PC-9 (cell line): ENCODE measurements at regions of chr2 and their contacts with region 1.

Region 1: DNA sequence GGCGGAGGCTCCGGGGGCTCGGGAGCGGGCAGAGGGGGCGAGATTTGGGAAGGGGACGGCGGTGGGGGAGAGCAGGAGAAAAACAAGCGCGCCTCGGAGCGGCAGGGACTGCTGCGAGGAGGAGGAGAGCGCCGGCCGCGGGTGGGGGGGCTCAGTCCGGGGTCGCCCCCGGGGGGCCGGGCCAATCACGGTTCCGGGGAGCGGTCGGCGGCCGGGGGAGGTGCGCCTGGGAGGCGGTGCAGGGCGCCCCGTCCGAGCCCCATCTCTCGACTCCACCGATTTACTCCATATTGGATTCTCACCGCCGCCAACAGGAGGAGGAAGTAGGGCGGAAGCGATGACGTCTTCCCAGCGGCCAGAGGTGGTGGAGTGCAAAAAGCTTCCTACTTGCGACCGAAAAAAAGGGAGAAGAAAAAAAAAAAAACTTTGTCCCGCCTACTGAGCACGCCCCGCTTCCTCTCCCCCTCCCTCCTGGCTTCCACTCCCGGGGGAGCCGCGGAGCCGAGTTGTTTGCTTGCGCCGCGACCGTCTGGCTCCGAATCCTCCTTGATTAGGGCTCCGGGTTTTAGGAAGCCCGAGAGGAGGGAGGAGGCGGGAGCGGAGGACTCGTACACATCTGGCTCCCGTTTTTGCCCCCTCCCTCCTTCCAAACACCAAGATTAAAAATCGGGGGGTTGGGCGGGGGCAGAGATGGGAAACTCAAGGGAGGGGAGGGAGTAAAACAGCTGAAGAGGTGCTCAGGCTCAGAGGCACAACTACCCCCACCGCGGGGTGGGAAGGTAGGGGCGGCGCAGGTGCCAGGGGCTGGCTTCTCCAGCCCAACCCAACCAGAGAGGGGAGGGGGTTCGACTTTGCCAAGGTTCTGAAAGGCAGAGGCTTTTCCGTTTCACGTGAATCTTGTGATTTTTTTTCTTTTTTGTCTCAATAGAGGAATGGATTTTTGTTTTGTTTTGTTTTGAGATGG is at the start of gene SPRED2:
- DNase-seq: peak; percentile 92
- H3K4me3 ChIP-seq: peak within 1 kb of the TSS; percentile 91
- H3K27ac ChIP-seq: peak within 1 kb of the TSS; percentile 59
- H3K4me1 ChIP-seq: peaks cover 55% of the 10 kb centered on the region
- H3K27me3 ChIP-seq: no peaks in the 10 kb centered on the region
- CTCF ChIP-seq: no peak
- total RNA-seq, gene SPRED2: 33.5 and 33.6 TPM in 2 replicates

Region 2: DNA sequence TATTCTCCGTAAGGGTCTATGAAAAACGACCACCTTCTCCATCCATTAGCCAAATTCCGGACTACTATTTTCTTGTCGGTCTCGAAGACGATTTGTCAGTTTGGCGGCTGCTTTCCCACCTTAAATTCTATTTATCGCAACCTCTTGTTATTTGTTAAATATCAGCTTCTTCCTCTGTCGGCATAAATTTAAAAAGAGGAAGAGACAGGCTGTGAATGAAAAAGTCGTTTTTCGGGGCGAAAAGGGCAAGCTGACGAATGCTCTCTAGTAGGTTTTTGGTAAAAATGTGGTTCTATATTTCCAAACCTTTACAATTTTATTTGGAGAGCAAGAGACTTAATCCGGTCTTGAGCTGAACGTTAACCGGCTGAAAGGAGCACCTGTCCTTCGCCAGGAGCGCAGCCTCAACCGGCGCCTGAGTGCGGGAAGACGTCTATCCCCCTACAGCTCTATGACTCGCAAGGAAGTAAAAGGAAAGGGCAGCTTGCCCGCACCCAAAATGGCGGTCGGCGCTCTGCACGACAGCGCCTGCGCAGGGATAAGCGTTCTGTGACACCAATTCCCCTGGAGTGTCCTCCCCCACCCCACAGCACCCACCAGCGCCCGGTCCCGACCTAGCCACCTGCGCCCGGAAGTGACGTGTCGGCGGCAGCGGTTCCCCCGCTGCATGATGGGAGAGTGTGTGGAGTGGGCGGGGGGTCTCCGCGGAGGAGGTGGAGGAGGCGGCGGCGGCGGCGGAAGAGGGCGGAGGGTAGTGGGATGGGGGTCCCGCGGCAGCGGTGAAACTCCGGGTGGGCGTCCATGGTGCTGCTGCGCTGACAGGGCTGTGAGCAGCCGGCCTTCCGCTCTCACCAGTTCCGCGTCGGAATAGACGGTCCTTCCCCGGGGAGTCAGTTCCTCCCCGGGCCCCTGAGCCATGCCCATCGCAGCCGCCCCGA is 908.6 kb before region 1 on chr2 and contains the start of gene AFTPH:
- CTCF ChIA-PET with region 1: no interaction called
- POLR2A ChIA-PET with region 1: no interaction called
- intact Hi-C with region 1: loop called (anchors 5 kb)
- DNase-seq: peak; percentile 98 to 99
- H3K4me3 ChIP-seq: peak within 1 kb of the TSS; percentile 67
- H3K27ac ChIP-seq: peak within 1 kb of the TSS; percentile 72
- H3K4me1 ChIP-seq: peaks cover 18% of the 10 kb centered on the region
- H3K27me3 ChIP-seq: no peaks in the 10 kb centered on the region
- CTCF ChIP-seq: no peak
- total RNA-seq, gene AFTPH: 34.4 and 40.5 TPM in 2 replicates

Region 3: GRCh38 chr2:65281627-65282351 is 150.7 kb before region 1 on chr2:
- CTCF ChIA-PET with region 1: interaction called, 4 read pairs
- POLR2A ChIA-PET with region 1: no interaction called
- intact Hi-C with region 1: loop called (anchors 5 kb)
- DNase-seq: no peak
- H3K4me3 ChIP-seq: no peak overlapping the region
- H3K27ac ChIP-seq: no peak overlapping the region
- H3K4me1 ChIP-seq: no peaks in the 10 kb centered on the region
- H3K27me3 ChIP-seq: no peaks in the 10 kb centered on the region
- CTCF ChIP-seq: no peak

Region 4: GRCh38 chr2:65382776-65383357 is 49.6 kb before region 1 on chr2:
- CTCF ChIA-PET with region 1: interaction called, 5 read pairs
- POLR2A ChIA-PET with region 1: no interaction called
- intact Hi-C with region 1: loop called (anchors 1 kb)
- DNase-seq: peak; percentile 97 to 98
- H3K4me3 ChIP-seq: peak overlapping the region; percentile 15; the same call in 1 of the 2 replicates
- H3K27ac ChIP-seq: peak overlapping the region; percentile 82
- H3K4me1 ChIP-seq: peaks cover 78% of the 10 kb centered on the region
- H3K27me3 ChIP-seq: no peaks in the 10 kb centered on the region
- CTCF ChIP-seq: peak; percentile 38; the same call in 1 of the 2 replicates

Region 5: DNA sequence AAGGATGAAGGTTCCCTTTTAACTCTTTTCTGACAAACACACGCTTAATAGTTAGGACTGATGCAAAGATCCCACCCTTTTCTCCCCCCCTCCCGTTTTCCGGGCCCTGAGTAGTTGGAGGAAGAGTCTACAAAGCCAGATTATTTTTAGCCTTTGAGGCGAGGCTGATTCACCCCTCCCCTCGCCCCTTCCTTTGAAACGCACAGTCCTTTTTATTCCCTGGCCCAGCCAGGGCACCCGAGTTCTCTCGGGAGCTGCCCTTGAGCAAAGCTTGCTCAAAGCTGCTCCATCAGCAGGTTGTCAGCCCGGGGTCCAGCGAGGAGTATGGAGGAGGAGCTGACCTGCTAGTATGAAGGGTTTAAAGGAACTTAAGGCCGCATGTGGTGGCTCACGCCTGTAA is 47.0 kb after region 1 on chr2:
- CTCF ChIA-PET with region 1: no interaction called
- POLR2A ChIA-PET with region 1: no interaction called
- intact Hi-C with region 1: no loop called
- DNase-seq: no peak
- H3K4me3 ChIP-seq: no peak overlapping the region
- H3K27ac ChIP-seq: no peak overlapping the region
- H3K4me1 ChIP-seq: no peaks in the 10 kb centered on the region
- H3K27me3 ChIP-seq: no peaks in the 10 kb centered on the region
- CTCF ChIP-seq: no peak

Region 6: GRCh38 chr2:65554765-65555591 is 122.5 kb after region 1 on chr2:
- CTCF ChIA-PET with region 1: interaction called, 3 read pairs
- POLR2A ChIA-PET with region 1: no interaction called
- intact Hi-C with region 1: loop called (anchors 1 kb)
- DNase-seq: peak; percentile 69 to 85
- H3K4me3 ChIP-seq: no peak overlapping the region
- H3K27ac ChIP-seq: peak overlapping the region; percentile 31
- H3K4me1 ChIP-seq: peaks cover 25% of the 10 kb centered on the region
- H3K27me3 ChIP-seq: no peaks in the 10 kb centered on the region
- CTCF ChIP-seq: no peak

Region 7: GRCh38 chr2:65639156-65639864 is 206.8 kb after region 1 on chr2:
- CTCF ChIA-PET with region 1: interaction called, 12 read pairs
- POLR2A ChIA-PET with region 1: no interaction called
- intact Hi-C with region 1: no loop called
- DNase-seq: no peak
- H3K4me3 ChIP-seq: no peak overlapping the region
- H3K27ac ChIP-seq: no peak overlapping the region
- H3K4me1 ChIP-seq: no peaks in the 10 kb centered on the region
- H3K27me3 ChIP-seq: no peaks in the 10 kb centered on the region
- CTCF ChIP-seq: no peak